Calu3 (cell line): ENCODE measurements at regions of chr10 and their contacts with region 1.

Region 1: GRCh38 chr10:34655286-34656170 is 159.6 kb downstream of the PARD3 start:
- DNase-seq: peak; percentile 74
- H3K4me3 Mint-ChIP-seq: no peak overlapping the region
- H3K27ac Mint-ChIP-seq: peak overlapping the region; percentile 31
- H3K4me1 Mint-ChIP-seq: peaks cover 42% of the 10 kb centered on the region
- H3K27me3 Mint-ChIP-seq: no peaks in the 10 kb centered on the region
- CTCF ChIP-seq: peak; percentile 69

Region 2: GRCh38 chr10:34698983-34699382 is 43.5 kb after region 1 on chr10:
- CTCF ChIA-PET with region 1: no interaction called
- intact Hi-C with region 1: loop called (anchors 1 kb)
- DNase-seq: peak; percentile 66
- H3K4me3 Mint-ChIP-seq: peak overlapping the region; percentile 33
- H3K27ac Mint-ChIP-seq: peak overlapping the region; percentile 53
- H3K4me1 Mint-ChIP-seq: peaks cover 67% of the 10 kb centered on the region
- H3K27me3 Mint-ChIP-seq: no peaks in the 10 kb centered on the region
- CTCF ChIP-seq: no peak

Region 3: GRCh38 chr10:34960983-34961382 is 305.5 kb after region 1 on chr10:
- CTCF ChIA-PET with region 1: no interaction called
- intact Hi-C with region 1: loop called (anchors 5 kb)
- DNase-seq: no peak
- H3K4me3 Mint-ChIP-seq: no peak overlapping the region
- H3K27ac Mint-ChIP-seq: no peak overlapping the region
- H3K4me1 Mint-ChIP-seq: no peaks in the 10 kb centered on the region
- H3K27me3 Mint-ChIP-seq: no peaks in the 10 kb centered on the region
- CTCF ChIP-seq: no peak